ENCODE measurements at regions of chr20 and their contacts with region 1.

Region 1: DNA sequence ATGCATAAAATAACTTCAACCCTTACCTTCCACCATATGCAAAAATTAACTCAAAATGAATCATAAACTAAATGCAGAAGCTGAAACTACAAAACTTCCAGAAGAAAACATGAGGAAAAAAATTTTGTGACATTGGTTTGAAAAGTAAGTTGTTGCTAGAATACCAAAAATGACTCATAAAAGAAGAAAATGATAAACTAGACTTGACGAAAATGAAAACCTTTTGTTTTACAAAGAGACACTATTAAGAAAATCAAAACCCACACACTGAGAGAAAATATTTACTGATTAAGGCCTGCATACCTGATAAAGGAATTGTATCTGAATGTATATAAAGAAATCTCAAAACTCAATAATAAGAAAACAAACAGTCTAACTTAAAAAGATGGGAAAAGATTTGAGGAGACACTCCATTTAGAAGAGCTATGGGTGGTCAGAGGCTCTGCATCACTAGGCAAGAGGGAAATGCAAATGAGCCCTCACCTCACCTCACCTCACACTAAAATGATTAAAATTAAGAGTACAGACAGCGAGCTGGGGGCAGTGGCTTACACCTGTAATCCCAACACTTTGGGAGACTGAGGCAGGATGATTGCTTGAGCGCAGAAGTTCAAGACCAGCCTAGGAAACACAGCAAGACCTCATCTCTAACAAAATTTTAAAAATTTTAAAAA is 97.6 kb upstream of the CST7 start:
- DNase-seq: no peak
- ATAC-seq: no peak
- H3K4me3 ChIP-seq: no peak overlapping the region
- H3K27ac ChIP-seq: no peak overlapping the region
- H3K4me1 ChIP-seq: no peaks in the 10 kb centered on the region
- H3K27me3 ChIP-seq: peaks cover 0 to 8% (median 5%) of the 10 kb centered on the region in 7 donors
- CTCF ChIP-seq: no peak

Region 2: DNA sequence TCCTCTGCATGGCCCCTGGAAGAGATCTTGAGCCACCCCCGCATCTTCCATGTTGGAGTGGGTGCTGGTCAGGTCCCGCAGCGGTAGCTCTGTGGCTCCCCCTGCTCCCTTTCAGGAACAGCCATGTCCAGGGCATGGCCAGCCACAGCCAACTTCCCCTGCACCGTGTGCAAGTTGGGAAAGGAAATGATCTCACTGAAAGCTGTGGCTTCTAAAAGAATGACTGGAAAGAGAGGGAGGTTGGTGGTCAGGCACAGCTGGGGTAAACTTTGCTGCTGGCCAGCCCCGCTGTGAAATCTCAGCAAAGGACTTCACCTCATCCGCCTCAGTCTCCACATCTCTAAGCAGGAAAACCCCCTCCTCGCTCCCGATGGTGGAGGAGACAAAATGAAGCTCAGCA is 56.0 kb before region 1 on chr20:
- intact Hi-C with region 1: loop called in 1 of 10 experiments (anchors 10 kb)
- DNase-seq: no peak
- ATAC-seq: peak in 4 of 8 donors; percentile 10 to 52 (median 43)
- H3K4me3 ChIP-seq: no peak overlapping the region
- H3K27ac ChIP-seq: no peak overlapping the region
- H3K4me1 ChIP-seq: peaks cover 0 to 4% (median 0%) of the 10 kb centered on the region in 9 donors
- H3K27me3 ChIP-seq: peaks cover 0 to 16% (median 5%) of the 10 kb centered on the region in 7 donors
- CTCF ChIP-seq: no peak

Region 3: DNA sequence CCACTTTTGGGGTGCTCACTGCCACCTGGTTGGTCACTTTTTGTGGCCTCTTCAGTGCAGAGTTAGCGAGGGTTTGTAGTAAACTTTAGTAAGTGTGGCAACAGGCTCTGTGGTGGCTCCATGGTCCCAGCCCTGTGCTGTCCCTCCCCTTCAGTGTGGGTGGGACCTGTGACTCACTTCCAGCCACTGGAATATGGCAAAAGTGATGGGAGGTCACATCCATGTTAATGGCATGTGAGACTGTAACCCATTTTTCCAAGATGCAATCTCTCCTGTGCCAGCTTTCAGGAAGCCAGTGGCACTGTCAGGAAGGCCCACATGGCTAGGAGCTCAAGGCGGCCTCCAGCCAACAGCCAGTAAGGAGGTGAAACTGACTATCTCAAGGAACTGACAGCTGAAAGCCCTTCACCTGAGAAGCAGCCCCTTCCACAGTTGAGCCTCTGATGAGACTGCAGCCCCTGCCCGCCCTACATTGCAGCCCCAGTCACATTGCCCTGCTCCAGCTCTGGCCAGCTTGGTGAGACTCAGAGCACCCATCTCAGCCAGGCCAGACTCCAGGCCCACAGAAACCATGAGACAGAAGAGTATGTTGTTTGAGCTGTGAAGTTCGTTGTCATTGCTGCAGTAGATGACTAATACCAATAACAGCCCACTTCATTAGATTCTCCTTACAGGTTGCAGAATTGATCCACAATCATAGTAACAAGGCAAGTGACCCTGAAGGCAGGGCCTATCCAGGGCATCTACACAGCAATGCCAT is 84.5 kb after region 1 on chr20:
- intact Hi-C with region 1: no loop called
- DNase-seq: no peak
- ATAC-seq: no peak
- H3K4me3 ChIP-seq: no peak overlapping the region
- H3K27ac ChIP-seq: no peak overlapping the region
- H3K4me1 ChIP-seq: peaks cover 0 to 16% (median 0%) of the 10 kb centered on the region in 9 donors
- H3K27me3 ChIP-seq: no peaks in the 10 kb centered on the region
- CTCF ChIP-seq: no peak